A673 (cell line): ENCODE measurements at regions of chr3 and their contacts with region 1.

Region 1: GRCh38 chr3:127304121-127304744 is 16.4 kb upstream of the PRR20G start:
- DNase-seq: peak; percentile 10
- H3K4me3 ChIP-seq: no peak overlapping the region
- H3K27ac ChIP-seq: no peak overlapping the region
- H3K4me1 ChIP-seq: no peaks in the 10 kb centered on the region
- H3K27me3 ChIP-seq: peaks cover 86% of the 10 kb centered on the region
- CTCF ChIP-seq: no peak

Region 2: GRCh38 chr3:127411083-127411727 is 107.0 kb after region 1 on chr3:
- CTCF ChIA-PET with region 1: interaction called, 11 read pairs
- POLR2A ChIA-PET with region 1: no interaction called
- intact Hi-C with region 1: no loop called
- DNase-seq: no peak
- H3K4me3 ChIP-seq: no peak overlapping the region
- H3K27ac ChIP-seq: no peak overlapping the region
- H3K4me1 ChIP-seq: no peaks in the 10 kb centered on the region
- H3K27me3 ChIP-seq: peaks cover 26% of the 10 kb centered on the region
- CTCF ChIP-seq: no peak

Region 3: DNA sequence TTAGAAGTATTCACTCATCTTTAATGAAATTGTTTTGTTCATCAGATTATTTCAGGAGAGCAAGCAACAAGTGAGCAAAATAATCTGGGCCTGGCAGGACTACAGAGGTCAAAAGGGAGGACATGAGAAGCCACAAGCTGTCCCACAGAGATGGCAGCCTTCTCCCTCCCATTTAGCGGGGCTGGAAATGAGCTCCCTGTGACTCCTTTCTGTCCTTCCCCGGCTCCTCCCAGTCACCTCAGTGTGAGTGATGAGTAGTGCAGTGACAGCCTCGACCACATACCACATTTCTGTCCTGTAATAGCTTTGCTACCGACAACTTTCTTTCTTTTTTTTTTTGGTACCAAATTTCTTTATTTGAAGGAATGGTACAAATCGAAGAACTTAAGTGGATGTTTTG is 1459.7 kb after region 1 on chr3:
- CTCF ChIA-PET with region 1: no interaction called
- POLR2A ChIA-PET with region 1: no interaction called
- intact Hi-C with region 1: no loop called
- DNase-seq: no peak
- H3K4me3 ChIP-seq: no peak overlapping the region
- H3K27ac ChIP-seq: no peak overlapping the region
- H3K4me1 ChIP-seq: no peaks in the 10 kb centered on the region
- H3K27me3 ChIP-seq: no peaks in the 10 kb centered on the region
- CTCF ChIP-seq: no peak